Activated B cell treated with CpG ODN at 0.5 μM for 24 hours (primary cell): ENCODE measurements at regions of chr17 and their contacts with region 1.

Region 1: GRCh38 chr17:48724251-48725003 is 1.4 kb downstream of the PRAC2 start:
- DNase-seq: peak; percentile 57
- ATAC-seq: peak; percentile 75
- H3K4me3 Mint-ChIP-seq: peak overlapping the region; percentile 67
- H3K27ac Mint-ChIP-seq: peak overlapping the region; percentile 63
- H3K4me1 Mint-ChIP-seq: peaks cover 37% of the 10 kb centered on the region
- H3K27me3 Mint-ChIP-seq: peaks cover 80% of the 10 kb centered on the region
- CTCF ChIP-seq: no peak

Region 2: DNA sequence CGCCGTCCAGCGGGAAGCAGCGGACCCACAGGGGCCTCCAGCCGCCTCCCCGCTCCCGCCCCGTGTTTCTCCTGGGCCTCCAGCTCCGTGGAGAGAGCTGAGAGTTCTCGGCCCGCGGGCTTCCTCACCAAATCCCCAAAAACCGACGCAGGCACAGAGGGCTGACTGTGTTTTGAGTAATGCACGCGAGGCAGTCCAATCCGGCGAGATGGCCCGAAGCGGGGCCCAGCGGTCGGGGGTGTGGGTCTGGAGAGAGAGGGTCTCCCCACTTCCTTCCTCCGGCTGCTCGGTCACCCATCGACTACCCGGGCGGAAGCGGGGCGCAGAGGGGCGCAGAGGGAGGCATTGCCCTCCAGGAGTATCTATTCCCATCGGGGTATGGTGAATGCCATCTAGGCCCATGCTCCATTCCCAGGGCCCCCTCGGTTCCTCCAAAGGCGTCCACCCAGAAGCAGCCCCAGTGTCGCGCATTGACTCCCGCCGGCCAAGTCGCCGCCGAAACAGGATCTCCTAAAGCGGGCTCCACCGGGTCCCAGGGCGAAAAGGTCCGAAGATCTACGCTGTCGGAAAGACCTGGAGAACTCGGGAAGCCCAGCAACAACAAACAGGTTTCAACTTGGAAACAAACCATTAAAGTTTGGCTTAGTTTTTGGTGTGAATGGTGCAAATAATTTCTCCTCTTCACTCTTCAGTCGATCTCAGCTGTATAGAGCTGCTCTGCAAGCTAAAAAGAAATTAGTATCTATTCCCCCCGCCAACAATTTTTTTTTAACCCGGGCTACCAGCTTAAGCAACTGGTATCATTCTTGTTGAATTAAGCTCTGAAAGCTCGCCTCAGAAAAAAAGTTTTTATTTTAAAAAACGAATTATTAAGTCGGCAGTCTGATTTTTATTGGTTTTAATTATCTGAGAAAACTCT is 23.3 kb after region 1 on chr17:
- CTCF ChIA-PET with region 1: interaction called, 4 read pairs
- POLR2A ChIA-PET with region 1: interaction called, 4 read pairs
- intact Hi-C with region 1: loop called (anchors 2 kb)
- DNase-seq: no peak
- ATAC-seq: no peak
- H3K4me3 Mint-ChIP-seq: no peak overlapping the region
- H3K27ac Mint-ChIP-seq: no peak overlapping the region
- H3K4me1 Mint-ChIP-seq: peaks cover 3% of the 10 kb centered on the region
- H3K27me3 Mint-ChIP-seq: peaks cover 60% of the 10 kb centered on the region
- CTCF ChIP-seq: no peak

Region 3: GRCh38 chr17:48791128-48792032 is 67.0 kb after region 1 on chr17:
- CTCF ChIA-PET with region 1: interaction called, 6 read pairs
- POLR2A ChIA-PET with region 1: no interaction called
- intact Hi-C with region 1: loop called (anchors 2 kb)
- DNase-seq: no peak
- ATAC-seq: peak; percentile 42
- H3K4me3 Mint-ChIP-seq: no peak overlapping the region
- H3K27ac Mint-ChIP-seq: no peak overlapping the region
- H3K4me1 Mint-ChIP-seq: peaks cover 5% of the 10 kb centered on the region
- H3K27me3 Mint-ChIP-seq: peaks cover 32% of the 10 kb centered on the region
- CTCF ChIP-seq: no peak

Region 4: DNA sequence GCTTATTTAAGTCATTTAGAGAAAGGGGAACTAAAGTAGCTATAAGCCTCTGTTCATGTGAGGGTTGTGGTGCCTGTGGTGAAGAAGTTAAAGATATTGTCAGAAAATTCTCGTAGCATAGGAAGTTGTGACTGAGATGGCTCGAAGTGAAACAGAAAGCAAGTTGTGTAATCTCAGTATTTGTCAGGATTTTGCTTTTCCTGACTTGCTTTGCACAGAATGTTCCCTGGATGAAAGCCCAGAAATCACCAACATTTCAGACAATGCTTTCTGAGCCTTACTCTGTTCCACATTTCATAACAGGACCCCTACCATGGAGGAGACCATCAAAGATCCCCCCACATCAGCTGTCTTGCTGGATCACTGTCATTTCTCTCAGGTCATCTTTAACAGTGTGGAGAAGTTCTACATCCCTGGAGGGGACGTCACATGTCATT is 117.0 kb after region 1 on chr17:
- CTCF ChIA-PET with region 1: no interaction called
- POLR2A ChIA-PET with region 1: no interaction called
- intact Hi-C with region 1: no loop called
- DNase-seq: no peak
- ATAC-seq: peak; percentile 97
- H3K4me3 Mint-ChIP-seq: peak overlapping the region; percentile 82
- H3K27ac Mint-ChIP-seq: peak overlapping the region; percentile 93
- H3K4me1 Mint-ChIP-seq: peaks cover 57% of the 10 kb centered on the region
- H3K27me3 Mint-ChIP-seq: no peaks in the 10 kb centered on the region
- CTCF ChIP-seq: no peak